GM12878 (cell line): ENCODE measurements at regions of chr7 and their contacts with region 1.

Region 1: DNA sequence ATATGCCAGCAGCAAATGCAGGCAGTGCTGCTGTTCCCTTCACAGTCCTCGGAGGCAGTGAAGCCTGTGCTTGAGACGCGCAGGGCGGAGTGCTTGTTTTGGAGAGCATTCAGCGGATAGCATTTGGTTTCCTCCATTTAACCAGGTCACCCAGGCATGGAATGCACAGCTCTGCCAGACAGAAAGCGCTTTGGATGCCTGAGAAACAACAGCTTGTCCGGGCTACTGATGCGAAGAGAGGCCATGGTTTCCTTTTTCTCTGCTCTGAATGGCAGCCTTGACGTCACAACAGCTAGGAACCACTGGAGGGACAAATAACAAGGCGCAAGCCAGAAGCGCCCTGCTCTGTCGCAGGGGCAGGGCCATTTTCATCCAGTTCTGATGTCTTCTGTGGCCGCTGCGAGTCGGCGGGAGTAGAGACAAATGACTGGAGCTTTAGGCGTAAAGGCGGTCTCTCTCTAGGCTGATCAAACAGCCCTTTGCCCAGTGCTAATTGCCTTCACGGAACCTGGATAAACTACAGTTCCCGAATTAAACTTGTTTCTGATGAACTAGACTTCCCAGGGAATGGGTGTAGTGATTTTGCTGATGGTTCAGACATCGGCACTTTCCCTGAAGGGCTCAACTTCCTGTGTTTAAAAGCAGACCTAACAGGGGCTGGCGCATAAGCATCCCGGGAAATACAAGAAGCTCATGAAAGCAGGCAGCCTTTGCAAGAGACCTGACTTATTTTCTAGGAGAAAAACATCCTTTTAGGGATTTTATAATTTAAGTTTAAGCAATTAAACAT is 187.6 kb upstream of the KLF14 start:
- DNase-seq: no peak
- ATAC-seq: no peak
- H3K4me3 ChIP-seq: no peak overlapping the region
- H3K27ac ChIP-seq: no peak overlapping the region
- H3K4me1 ChIP-seq: peaks cover 19% of the 10 kb centered on the region
- H3K27me3 ChIP-seq: no peaks in the 10 kb centered on the region
- CTCF ChIP-seq: no peak
- EP300 ChIP-seq: no peak
- POLR2A ChIP-seq: 0 out of 2 replicates have a peak, but pooled peaks have one; percentile 16
- RAD21 ChIP-seq: no peak

Region 2: DNA sequence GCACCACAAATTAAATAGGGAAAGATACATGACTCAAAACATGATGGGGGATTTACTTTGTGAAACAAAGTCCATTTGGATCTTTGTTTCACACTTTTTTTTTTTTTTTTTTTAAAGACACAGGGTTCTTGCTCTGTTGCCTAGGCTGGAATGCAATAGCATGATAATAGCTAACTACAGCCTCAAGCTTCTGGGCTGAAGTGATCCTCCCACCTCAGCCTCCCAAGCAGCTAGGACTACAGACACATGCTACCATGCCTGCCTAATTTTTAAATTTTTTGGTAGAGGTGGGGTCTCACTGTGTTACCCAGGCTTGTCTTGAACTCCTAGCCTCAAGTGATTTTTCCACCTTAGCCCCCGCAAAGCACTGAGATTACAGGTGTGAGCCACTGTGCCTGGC is 15.0 kb before region 1 on chr7:
- CTCF ChIA-PET with region 1: no interaction called
- POLR2A ChIA-PET with region 1: no interaction called
- RAD21 ChIA-PET with region 1: no interaction called
- SMC1A ChIA-PET with region 1: no interaction called
- in situ Hi-C with region 1: no loop called
- intact Hi-C with region 1: no loop called
- DNase-seq: no peak
- ATAC-seq: no peak
- H3K4me3 ChIP-seq: no peak overlapping the region
- H3K27ac ChIP-seq: no peak overlapping the region
- H3K4me1 ChIP-seq: peaks cover 21% of the 10 kb centered on the region
- H3K27me3 ChIP-seq: no peaks in the 10 kb centered on the region
- CTCF ChIP-seq: no peak
- EP300 ChIP-seq: no peak
- POLR2A ChIP-seq: no peak
- RAD21 ChIP-seq: no peak

Region 3: DNA sequence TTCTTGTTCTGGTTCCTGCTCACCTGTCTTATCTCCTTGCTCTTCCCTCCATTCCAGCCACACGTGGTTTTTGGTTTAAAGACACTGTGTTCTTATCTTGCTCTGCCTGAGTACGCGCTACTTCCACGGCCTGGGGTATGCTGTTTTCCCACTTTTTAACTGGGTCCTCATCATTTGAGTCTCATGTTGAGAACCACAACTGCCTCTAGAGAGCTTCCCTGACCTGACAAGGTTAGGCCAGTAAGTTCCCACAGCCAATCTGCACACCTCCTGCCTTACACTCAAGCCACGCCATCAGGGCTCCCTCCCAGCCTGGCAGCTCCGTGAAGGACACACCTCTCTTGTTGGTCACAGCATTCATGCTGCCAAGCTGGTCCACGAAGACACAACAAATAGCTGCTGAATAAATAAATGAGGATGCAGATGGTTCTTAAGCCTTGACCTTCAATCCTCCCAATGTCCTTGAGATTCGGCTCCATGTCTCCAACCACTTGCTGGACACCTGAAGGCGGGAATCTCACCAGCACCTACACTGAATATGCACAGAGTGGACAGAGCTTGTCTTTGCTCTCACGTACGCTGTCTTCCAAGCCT is 14.1 kb after region 1 on chr7:
- CTCF ChIA-PET with region 1: interaction called, 4 read pairs
- POLR2A ChIA-PET with region 1: interaction called, 10 read pairs
- RAD21 ChIA-PET with region 1: no interaction called
- SMC1A ChIA-PET with region 1: interaction called, 7 read pairs
- in situ Hi-C with region 1: no loop called
- intact Hi-C with region 1: no loop called
- DNase-seq: no peak
- ATAC-seq: no peak
- H3K4me3 ChIP-seq: no peak overlapping the region
- H3K27ac ChIP-seq: no peak overlapping the region
- H3K4me1 ChIP-seq: no peaks in the 10 kb centered on the region; the same call in 1 of the 2 replicates
- H3K27me3 ChIP-seq: no peaks in the 10 kb centered on the region
- CTCF ChIP-seq: no peak
- EP300 ChIP-seq: no peak
- POLR2A ChIP-seq: peak; percentile 55
- RAD21 ChIP-seq: no peak

Region 4: DNA sequence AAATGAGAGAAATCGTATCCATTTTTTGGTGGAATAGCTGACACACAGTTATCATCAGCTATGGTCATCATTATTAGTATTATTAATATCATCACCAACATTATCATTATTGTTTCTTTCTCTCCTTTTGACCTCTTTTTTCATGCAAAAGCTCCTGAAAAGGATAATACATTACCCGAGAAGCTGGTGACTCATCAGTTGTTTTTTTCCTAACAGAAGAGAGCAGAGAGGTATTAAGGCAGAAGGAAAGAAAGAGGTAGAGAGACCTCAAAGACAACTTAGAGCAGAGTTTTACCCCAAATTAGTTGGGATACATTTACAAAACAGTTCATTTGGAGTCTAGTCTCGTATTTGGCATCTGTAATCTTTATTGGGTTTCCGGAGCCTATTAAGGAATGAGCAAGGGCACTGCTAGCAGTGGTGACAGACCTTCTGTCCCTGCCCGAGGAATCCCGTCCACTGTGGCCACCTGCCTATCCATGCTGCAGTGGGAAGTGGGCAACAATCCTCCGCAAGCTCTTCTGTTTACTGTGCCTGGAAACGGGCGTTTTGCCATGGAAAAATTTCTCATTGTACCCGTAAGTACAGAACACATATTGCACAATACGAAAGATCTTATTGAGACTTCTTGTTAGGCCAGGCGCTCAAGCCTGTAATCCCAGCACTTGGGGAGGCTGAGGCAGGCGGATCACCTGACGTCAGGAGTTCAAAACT is 236.1 kb after region 1 on chr7:
- CTCF ChIA-PET with region 1: no interaction called
- POLR2A ChIA-PET with region 1: no interaction called
- RAD21 ChIA-PET with region 1: no interaction called
- SMC1A ChIA-PET with region 1: no interaction called
- in situ Hi-C with region 1: no loop called
- intact Hi-C with region 1: no loop called
- DNase-seq: no peak
- ATAC-seq: no peak
- H3K4me3 ChIP-seq: no peak overlapping the region
- H3K27ac ChIP-seq: no peak overlapping the region
- H3K4me1 ChIP-seq: no peaks in the 10 kb centered on the region
- H3K27me3 ChIP-seq: no peaks in the 10 kb centered on the region
- CTCF ChIP-seq: no peak
- EP300 ChIP-seq: no peak
- POLR2A ChIP-seq: no peak
- RAD21 ChIP-seq: no peak